ENCODE measurements at regions of chr2 and their contacts with region 1.

Region 1: GRCh38 chr2:88016086-88016959 is at the start of gene RNU2-63P:
- DNase-seq: peak; percentile 82 to 91 (median 86)
- ATAC-seq: peak; percentile 90
- H3K4me3 ChIP-seq: peak within 1 kb of the TSS; percentile 55
- H3K27ac ChIP-seq: peak within 1 kb of the TSS; percentile 100
- H3K4me1 ChIP-seq: peaks cover 11 to 14% of the 10 kb centered on the region in 2 experiments; a peak in 4 of 5 replicates
- H3K27me3 ChIP-seq: no peaks in the 10 kb centered on the region
- CTCF ChIP-seq: no peak
- EP300 ChIP-seq: peak; percentile 53
- POLR2A ChIP-seq: peak; percentile 100
- RAD21 ChIP-seq: peak in 1 of 2 experiments; percentile 15; a peak in 2 of 4 replicates
- polyA plus RNA-seq, gene RNU2-63P: 5.8 TPM in 1 of 2 experiments, not detected in the other

Region 2: GRCh38 chr2:88003074-88003755 is 13.1 kb before region 1 on chr2:
- CTCF ChIA-PET with region 1: no interaction called
- POLR2A ChIA-PET with region 1: interaction called, 24 read pairs
- in situ Hi-C with region 1: no loop called
- intact Hi-C with region 1: no loop called
- DNase-seq: no peak
- ATAC-seq: no peak; the same call in 2 of the 3 replicates
- H3K4me3 ChIP-seq: no peak overlapping the region
- H3K27ac ChIP-seq: no peak overlapping the region
- H3K4me1 ChIP-seq: peaks cover 0 to 6% of the 10 kb centered on the region in 2 experiments; a peak in 2 of 5 replicates
- H3K27me3 ChIP-seq: no peaks in the 10 kb centered on the region
- CTCF ChIP-seq: no peak
- EP300 ChIP-seq: no peak
- POLR2A ChIP-seq: no peak
- RAD21 ChIP-seq: no peak

Region 3: GRCh38 chr2:88074854-88075292 is 58.5 kb after region 1 on chr2:
- CTCF ChIA-PET with region 1: no interaction called
- POLR2A ChIA-PET with region 1: no interaction called
- in situ Hi-C with region 1: no loop called
- intact Hi-C with region 1: no loop called
- DNase-seq: no peak
- ATAC-seq: no peak
- H3K4me3 ChIP-seq: no peak overlapping the region
- H3K27ac ChIP-seq: no peak overlapping the region
- H3K4me1 ChIP-seq: peaks cover 0 to 3% of the 10 kb centered on the region in 2 experiments; a peak in 2 of 5 replicates
- H3K27me3 ChIP-seq: 0 out of 5 replicates have a peak, but pooled peaks cover 0 to 4% of the 10 kb centered on the region in 2 experiments
- CTCF ChIP-seq: no peak
- EP300 ChIP-seq: no peak
- POLR2A ChIP-seq: no peak
- RAD21 ChIP-seq: no peak

Region 4: DNA sequence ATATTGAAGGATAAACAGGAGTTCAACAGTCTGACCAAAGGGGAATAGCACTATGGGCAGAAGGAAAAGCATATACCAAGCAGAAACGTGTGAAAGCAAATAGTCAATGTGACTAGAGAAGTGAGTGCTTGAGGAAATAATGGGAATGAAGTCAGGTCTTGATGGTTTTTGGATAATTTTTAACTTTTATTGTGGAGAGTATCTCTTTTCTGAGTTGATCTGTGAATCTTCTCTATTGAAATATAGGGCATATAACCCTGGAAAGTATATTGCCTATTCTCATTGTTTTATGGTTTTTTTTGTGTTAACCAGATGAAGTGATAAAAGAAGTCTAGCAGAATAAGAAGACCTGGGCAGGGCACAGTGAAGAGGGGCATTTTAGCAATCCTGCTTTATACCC is 127.9 kb after region 1 on chr2:
- CTCF ChIA-PET with region 1: no interaction called
- POLR2A ChIA-PET with region 1: no interaction called
- in situ Hi-C with region 1: no loop called
- intact Hi-C with region 1: no loop called
- DNase-seq: no peak
- ATAC-seq: no peak
- H3K4me3 ChIP-seq: no peak overlapping the region
- H3K27ac ChIP-seq: no peak overlapping the region
- H3K4me1 ChIP-seq: no peaks in the 10 kb centered on the region
- H3K27me3 ChIP-seq: peaks cover 0 to 3% of the 10 kb centered on the region in 2 experiments; a peak in 1 of 5 replicates
- CTCF ChIP-seq: no peak
- EP300 ChIP-seq: no peak
- POLR2A ChIP-seq: no peak
- RAD21 ChIP-seq: no peak

Region 5: GRCh38 chr2:88159955-88160415 is 143.7 kb after region 1 on chr2:
- CTCF ChIA-PET with region 1: no interaction called
- POLR2A ChIA-PET with region 1: interaction called, 9 read pairs
- in situ Hi-C with region 1: loop called (anchors 10 kb)
- intact Hi-C with region 1: loop called (anchors 5 kb)
- DNase-seq: peak; percentile 60 to 82 (median 64)
- ATAC-seq: peak; percentile 82
- H3K4me3 ChIP-seq: no peak overlapping the region
- H3K27ac ChIP-seq: no peak overlapping the region
- H3K4me1 ChIP-seq: no peaks in the 10 kb centered on the region; a peak in 1 of 5 replicates
- H3K27me3 ChIP-seq: peaks cover 11 to 12% of the 10 kb centered on the region in 2 experiments; a peak in 3 of 5 replicates
- CTCF ChIP-seq: peak; percentile 78 to 92 (median 84)
- EP300 ChIP-seq: no peak
- POLR2A ChIP-seq: no peak
- RAD21 ChIP-seq: peak; percentile 95 to 96